Activated naive CD4-positive, alpha-beta T cell treated with anti-CD3 and anti-CD28 coated beads for 36 hours (primary cell): ENCODE measurements at regions of chr17 and their contacts with region 1.

Region 1: DNA sequence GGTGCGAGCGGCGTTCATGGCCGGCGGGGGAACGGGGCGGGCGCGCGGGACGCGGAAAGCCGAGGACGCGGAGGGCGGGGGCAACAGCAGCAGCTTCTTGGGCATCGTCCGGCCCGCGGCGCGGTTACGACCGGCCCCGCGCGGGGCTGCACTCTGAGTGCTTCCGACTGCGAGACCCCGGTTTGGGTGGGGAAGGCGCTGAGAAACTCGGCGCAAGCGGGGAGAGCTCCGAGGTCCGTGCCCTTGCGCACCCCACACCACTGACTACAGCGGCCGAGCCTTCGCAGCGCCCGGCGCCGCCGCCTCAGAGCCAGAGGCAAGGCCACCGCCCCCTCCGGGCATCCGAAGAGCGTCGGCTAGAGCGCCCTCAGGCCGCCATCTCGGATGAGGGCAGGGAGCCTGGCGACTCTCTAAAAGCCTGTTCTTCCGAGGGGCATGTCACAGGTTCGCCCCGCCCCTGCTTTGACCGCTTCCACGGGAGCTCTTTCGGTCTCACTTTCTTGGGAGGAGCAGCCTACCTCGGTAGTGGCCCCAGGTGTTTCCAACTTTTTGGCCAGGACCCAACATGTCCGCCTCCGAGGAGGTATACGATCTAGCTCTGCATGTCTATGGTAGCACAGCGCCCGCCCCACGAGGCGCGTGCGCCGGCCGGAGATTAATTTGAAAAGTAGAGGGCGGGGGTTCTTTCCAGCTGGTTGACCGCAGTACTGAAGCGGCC is at the start of gene PRPSAP1:
- DNase-seq: peak; percentile 87
- H3K4me3 Mint-ChIP-seq: peak within 1 kb of the TSS; percentile 94
- H3K27ac Mint-ChIP-seq: peak within 1 kb of the TSS; percentile 98
- H3K4me1 Mint-ChIP-seq: peaks cover 19% of the 10 kb centered on the region
- H3K27me3 Mint-ChIP-seq: no peaks in the 10 kb centered on the region
- total RNA-seq, gene PRPSAP1: 30.1 to 33.3 TPM

Region 2: DNA sequence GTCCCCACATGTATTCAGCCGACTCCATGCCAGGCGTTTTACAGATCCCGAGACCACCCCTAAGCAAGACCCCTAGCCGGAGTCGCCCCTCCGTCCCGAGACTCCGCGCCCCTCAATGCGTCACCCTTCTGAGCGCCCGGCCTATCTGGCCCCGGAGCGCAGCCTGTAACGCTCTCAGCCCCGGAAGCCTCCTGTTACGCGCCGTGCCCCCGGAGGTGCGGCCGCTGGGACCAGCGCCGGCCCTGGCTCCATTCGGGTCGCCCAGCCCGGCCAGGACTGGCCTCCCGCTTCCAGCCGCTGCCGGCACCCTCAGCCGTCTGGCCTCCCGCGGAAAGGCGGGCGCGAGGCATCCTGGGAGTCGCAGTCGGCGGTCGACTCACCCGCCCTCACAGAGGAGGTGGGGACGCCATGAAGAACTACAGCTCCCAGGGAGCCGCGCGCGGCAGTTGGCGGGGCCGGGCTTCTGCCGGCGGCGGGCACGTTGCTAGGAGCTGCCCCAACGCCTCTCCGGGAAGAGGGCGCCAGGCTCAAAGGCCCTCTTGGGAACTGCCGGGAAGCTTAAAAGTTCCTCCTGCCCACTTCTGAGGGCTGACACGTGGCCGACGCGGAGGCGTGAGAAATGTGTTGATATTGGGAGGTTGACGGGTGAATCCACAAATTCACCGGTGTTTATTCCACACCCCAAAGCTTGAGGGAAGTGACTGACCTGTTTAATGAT is 412.9 kb before region 1 on chr17 and contains the start of gene FBF1:
- CTCF ChIA-PET with region 1: interaction called, 3 read pairs
- intact Hi-C with region 1: loop called (anchors 1 kb)
- DNase-seq: peak; percentile 92
- H3K4me3 Mint-ChIP-seq: peak within 1 kb of the TSS; percentile 88
- H3K27ac Mint-ChIP-seq: peak within 1 kb of the TSS; percentile 76
- H3K4me1 Mint-ChIP-seq: peaks cover 11% of the 10 kb centered on the region
- H3K27me3 Mint-ChIP-seq: no peaks in the 10 kb centered on the region
- total RNA-seq, gene FBF1: 20.7 to 21.0 TPM

Region 3: DNA sequence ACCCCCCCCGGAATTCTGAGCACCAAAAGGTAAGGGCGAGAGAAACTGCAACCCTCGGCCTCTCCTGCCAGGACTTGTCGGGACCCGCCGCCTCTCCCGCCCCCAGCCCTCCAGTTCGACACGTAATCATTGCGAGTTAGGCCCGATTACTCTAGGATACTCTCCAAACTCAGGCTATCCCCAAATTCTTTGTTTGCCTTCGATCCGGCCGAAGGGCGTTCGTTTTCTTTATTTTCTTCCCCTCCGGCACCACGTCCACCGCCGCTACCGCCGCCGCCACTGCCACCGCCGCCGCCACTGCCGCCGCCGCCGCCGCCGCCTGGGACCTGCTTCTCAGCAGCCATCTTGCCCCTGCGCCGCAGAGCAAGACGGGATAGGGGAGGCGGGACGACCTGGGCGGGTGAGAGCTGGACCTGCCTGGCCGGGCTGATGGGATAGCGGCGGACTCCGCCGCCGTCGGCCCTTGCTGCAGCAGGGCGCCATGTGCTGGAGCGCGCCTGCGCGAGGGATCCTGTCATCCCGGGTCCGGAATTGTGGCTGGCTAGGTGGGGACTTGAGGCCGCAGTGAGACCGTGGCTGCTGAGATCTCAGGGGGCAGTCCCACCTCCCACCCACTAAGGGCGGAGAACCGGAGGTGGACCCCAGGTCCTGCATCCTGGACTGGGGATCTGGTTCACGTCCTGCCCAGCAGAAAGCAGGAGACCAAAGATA is 281.5 kb before region 1 on chr17 and contains the start of gene SRP68:
- CTCF ChIA-PET with region 1: no interaction called
- intact Hi-C with region 1: no loop called
- DNase-seq: peak; percentile 86
- H3K4me3 Mint-ChIP-seq: peak within 1 kb of the TSS; percentile 95
- H3K27ac Mint-ChIP-seq: peak within 1 kb of the TSS; percentile 98
- H3K4me1 Mint-ChIP-seq: peaks cover 49% of the 10 kb centered on the region
- H3K27me3 Mint-ChIP-seq: peaks cover 33% of the 10 kb centered on the region
- total RNA-seq, gene SRP68: 127 to 131 TPM

Region 4: GRCh38 chr17:76292567-76292966 is 61.2 kb before region 1 on chr17:
- CTCF ChIA-PET with region 1: no interaction called
- intact Hi-C with region 1: no loop called
- DNase-seq: no peak
- H3K4me3 Mint-ChIP-seq: no peak overlapping the region
- H3K27ac Mint-ChIP-seq: no peak overlapping the region
- H3K4me1 Mint-ChIP-seq: no peaks in the 10 kb centered on the region
- H3K27me3 Mint-ChIP-seq: no peaks in the 10 kb centered on the region

Region 5: GRCh38 chr17:76473541-76473985 is 119.8 kb after region 1 on chr17:
- CTCF ChIA-PET with region 1: no interaction called
- intact Hi-C with region 1: no loop called
- DNase-seq: peak; percentile 16
- H3K4me3 Mint-ChIP-seq: no peak overlapping the region
- H3K27ac Mint-ChIP-seq: no peak overlapping the region
- H3K4me1 Mint-ChIP-seq: no peaks in the 10 kb centered on the region
- H3K27me3 Mint-ChIP-seq: no peaks in the 10 kb centered on the region